ENCODE measurements at regions of chr11 and their contacts with region 1.

Region 1: DNA sequence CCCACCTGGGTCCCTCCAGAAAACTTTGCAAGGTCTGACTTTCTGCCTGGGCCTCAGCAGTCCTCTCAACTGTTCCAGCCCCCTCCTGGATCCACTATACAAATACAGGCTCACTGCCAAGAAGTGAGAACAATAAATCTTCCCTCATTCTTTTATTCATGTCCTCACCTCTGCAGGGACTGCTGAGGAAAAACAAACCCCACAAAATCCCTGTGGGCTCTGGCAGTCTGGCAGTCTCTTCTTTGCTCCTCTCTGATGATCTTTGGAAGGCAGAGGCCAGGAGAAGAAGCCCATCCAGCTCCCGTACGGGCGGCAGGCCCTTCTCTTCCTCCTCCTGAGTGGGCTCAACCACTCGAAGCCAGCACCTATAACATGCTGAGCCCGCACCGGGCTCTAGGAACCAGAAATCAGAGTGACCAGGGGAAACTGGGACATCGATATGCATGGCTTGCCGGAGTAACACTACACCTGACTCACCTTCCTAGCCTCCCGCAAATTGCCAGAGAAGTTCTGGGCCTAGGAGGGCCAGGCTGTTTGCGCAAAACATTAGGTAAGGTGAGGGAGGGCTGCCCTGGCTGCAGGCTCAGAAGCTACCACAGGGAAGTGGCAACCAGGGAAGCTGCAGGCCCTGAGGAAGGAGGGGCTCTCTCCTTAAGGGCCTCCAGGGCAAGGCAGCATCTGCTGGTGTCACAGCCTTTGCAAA is 24.2 kb downstream of the TMPRSS5 start:
- DNase-seq: no peak

Region 2: GRCh38 chr11:113693030-113693429 is 11.2 kb after region 1 on chr11:
- intact Hi-C with region 1: loop called in 1 of 2 experiments (anchors 1 kb)
- DNase-seq: no peak

Measured in posterior vena cava (tissue), 2 donors.